ENCODE measurements at regions of chr7 and their contacts with region 1.

Region 1: DNA sequence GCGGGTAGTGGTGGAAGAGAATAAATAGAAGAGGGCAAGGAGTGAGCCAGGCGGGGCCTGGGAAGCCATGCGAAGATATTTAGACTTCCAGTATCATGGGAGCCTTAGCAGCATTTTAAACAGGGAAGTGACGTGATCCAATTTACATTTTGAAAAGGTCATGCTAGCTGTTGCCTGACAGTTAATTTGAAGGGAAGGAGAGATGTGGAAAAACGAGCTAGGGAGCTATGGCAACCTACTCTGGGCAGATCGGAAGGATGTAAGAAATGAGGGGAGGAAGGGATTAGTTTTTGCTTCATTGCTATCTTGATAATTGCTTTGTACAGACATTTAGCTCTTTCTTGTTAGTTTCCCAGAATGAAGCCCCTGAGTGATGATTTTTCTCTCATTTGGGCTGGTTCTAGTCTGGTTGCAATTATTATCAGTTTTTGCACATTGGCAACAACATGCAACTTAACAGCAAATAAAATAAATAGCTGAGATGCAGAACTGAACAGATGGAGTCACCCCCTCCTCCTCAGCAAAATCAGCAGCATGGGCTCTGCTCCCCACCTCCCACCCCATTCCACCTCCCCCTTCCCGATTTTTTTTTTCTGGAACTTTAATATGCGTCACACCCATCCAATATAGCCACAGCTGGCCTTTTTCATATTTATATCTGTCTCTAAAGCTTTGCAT is 13.0 kb upstream of the CALU start:
- DNase-seq: peak; percentile 70
- H3K4me3 ChIP-seq: no peak overlapping the region
- H3K27ac ChIP-seq: peak overlapping the region; percentile 76
- H3K4me1 ChIP-seq: peaks cover 14% of the 10 kb centered on the region
- H3K27me3 ChIP-seq: no peaks in the 10 kb centered on the region
- CTCF ChIP-seq: no peak

Region 2: GRCh38 chr7:128699895-128700294 is 26.3 kb before region 1 on chr7:
- CTCF ChIA-PET with region 1: no interaction called
- POLR2A ChIA-PET with region 1: interaction called, 10 read pairs
- intact Hi-C with region 1: no loop called
- DNase-seq: no peak
- H3K4me3 ChIP-seq: no peak overlapping the region
- H3K27ac ChIP-seq: no peak overlapping the region
- H3K4me1 ChIP-seq: no peaks in the 10 kb centered on the region
- H3K27me3 ChIP-seq: peaks cover 4% of the 10 kb centered on the region
- CTCF ChIP-seq: no peak

Region 3: GRCh38 chr7:128883622-128884501 is 157.7 kb after region 1 on chr7:
- CTCF ChIA-PET with region 1: no interaction called
- POLR2A ChIA-PET with region 1: no interaction called
- intact Hi-C with region 1: no loop called
- DNase-seq: peak; percentile 89
- H3K4me3 ChIP-seq: no peak overlapping the region
- H3K27ac ChIP-seq: no peak overlapping the region
- H3K4me1 ChIP-seq: no peaks in the 10 kb centered on the region
- H3K27me3 ChIP-seq: no peaks in the 10 kb centered on the region
- CTCF ChIP-seq: peak; percentile 97